ENCODE measurements at regions of chr1 and their contacts with region 1.

Region 1: GRCh38 chr1:14881775-14882672 is 271.5 kb upstream of the TMEM51 start:
- DNase-seq: no peak
- ATAC-seq: no peak
- H3K4me3 ChIP-seq: no peak overlapping the region
- H3K27ac ChIP-seq: no peak overlapping the region
- H3K4me1 ChIP-seq: no peaks in the 10 kb centered on the region
- H3K27me3 ChIP-seq: peaks cover 0 to 22% (median 0%) of the 10 kb centered on the region in 9 donors
- CTCF ChIP-seq: no peak
- POLR2A ChIP-seq: no peak

Region 2: GRCh38 chr1:14826172-14826636 is 55.8 kb before region 1 on chr1:
- intact Hi-C with region 1: loop called in 1 of 10 experiments (anchors 10 kb)
- DNase-seq: no peak
- ATAC-seq: peak in 1 of 4 donors; percentile 43
- H3K4me3 ChIP-seq: no peak overlapping the region
- H3K27ac ChIP-seq: no peak overlapping the region
- H3K4me1 ChIP-seq: no peaks in the 10 kb centered on the region
- H3K27me3 ChIP-seq: no peaks in the 10 kb centered on the region
- CTCF ChIP-seq: no peak
- POLR2A ChIP-seq: no peak